Posterior cingulate gyrus (tissue), 11 donors: ENCODE measurements at regions of chr2 and their contacts with region 1.

Region 1: GRCh38 chr2:3303583-3304406 is 73.8 kb downstream of the EIPR1 start:
- DNase-seq: peak; percentile 84 to 99 (median 92)

Region 2: GRCh38 chr2:1854729-1855547 is 1448.9 kb before region 1 on chr2:
- intact Hi-C with region 1: loop called (anchors 10 kb)
- DNase-seq: peak; percentile 43 to 95 (median 67)

Region 3: DNA sequence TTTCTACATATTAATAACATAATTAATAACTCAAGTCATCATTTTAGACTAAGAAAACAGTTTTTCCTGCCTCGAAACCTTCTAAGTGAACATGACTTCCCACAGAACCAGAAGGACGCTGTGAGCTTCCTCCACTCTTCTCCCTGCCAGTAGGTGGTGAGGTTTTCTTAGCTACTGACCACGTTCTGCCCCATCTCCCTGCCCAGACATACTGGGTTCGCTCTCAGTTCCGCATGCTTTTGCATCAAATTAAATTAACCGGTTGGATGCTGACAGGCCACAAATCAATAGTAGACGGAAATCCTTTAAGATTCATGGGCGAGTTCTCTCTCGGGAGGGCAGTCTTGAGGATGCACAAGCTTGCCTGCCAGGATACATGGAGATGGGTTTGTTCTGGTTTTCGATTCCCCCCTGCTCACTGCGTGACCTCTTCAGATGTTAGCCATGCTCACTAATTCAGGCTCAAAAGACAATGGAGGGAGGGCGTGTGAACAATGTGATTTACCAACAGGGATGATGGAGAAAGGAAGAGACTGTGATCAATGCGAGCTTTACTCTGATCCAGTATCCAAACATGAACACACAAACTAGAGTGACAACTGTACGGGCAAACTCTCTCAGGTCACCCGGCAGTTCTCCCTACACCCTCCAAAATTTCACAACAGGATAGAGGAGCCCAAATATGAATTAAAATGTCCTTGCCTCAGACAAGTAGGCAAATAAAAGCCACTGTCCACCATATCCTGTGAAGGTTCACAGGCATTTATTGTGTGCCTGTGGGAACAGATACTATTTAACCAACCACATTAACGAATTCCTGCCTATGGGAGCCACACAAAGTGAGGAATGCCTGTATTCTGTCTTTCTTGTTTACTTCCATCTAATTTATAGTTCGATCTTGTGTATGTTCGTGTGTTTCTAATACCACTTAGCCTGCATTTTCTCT is 301.9 kb before region 1 on chr2:
- intact Hi-C with region 1: loop called (anchors 1 kb)
- DNase-seq: peak in 1 of 10 donors; percentile 20

Region 4: GRCh38 chr2:3198119-3198518 is 105.7 kb before region 1 on chr2:
- intact Hi-C with region 1: loop called (anchors 10 kb)
- DNase-seq: peak in 4 of 10 donors; percentile 41 to 89 (median 76)